Tibial artery (tissue), 4 donors: ENCODE measurements at regions of chr3 and their contacts with region 1.

Region 1: GRCh38 chr3:52056968-52057805 is 816 bp upstream of the DUSP7 start:
- DNase-seq: peak; percentile 99 to 100
- H3K4me3 ChIP-seq: peak overlapping the region; percentile 72 to 81
- H3K27ac ChIP-seq: peak overlapping the region; percentile 83 to 86
- H3K4me1 ChIP-seq: peaks cover 5 to 43% (median 33%) of the 10 kb centered on the region in 4 donors
- H3K27me3 ChIP-seq: no peaks in the 10 kb centered on the region
- CTCF ChIP-seq: peak in 1 of 2 experiments; percentile 10

Region 2: GRCh38 chr3:51617597-51617996 is 439.6 kb before region 1 on chr3:
- intact Hi-C with region 1: no loop called
- DNase-seq: no peak
- H3K4me3 ChIP-seq: no peak overlapping the region
- H3K27ac ChIP-seq: no peak overlapping the region
- H3K4me1 ChIP-seq: peaks cover 0 to 37% (median 22%) of the 10 kb centered on the region in 4 donors
- H3K27me3 ChIP-seq: no peaks in the 10 kb centered on the region
- CTCF ChIP-seq: no peak

Region 3: DNA sequence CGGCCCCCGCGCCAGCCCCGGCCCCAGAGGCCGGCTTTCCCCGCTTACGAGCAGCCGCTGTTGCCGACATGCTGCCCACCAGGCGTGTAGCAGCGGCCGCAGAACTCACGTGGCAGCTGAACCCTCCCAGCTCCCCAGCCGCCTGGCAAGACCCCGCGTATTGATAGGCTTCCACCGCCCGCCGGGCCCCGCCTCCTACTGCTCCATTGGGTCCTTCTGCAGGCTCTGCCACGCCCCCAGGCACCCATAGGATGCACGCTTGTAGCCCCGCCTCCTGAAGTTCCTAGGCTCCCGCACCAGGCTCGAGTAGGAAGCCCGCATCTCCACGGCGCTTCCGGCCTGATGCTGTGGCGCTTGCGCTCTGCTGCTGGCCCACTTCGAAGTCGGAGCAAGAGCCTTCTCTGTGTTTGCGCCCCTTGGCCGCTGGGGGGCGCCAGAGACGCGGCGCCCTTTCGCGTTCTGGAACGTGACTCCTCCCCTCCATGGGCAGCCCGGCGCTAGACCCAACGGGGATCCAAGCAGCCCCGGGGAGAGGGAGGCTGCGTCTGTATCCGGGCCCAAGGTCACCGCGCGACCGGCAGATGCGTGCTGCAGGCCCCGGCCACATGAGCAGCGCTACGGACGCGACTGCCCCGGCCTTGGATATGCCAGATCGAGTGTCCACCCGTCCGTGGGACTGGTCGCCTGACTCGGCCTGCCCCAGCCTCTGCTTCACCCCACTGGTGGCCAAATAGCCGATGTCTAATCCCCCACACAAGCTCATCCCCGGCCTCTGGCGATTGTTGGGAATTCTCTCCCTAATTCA is 115.2 kb before region 1 on chr3 and contains the starts of genes PARP3 and RRP9:
- intact Hi-C with region 1: loop called (anchors 5 kb)
- DNase-seq: peak; percentile 100
- H3K4me3 ChIP-seq: peak within 1 kb of the TSS; percentile 72 to 78
- H3K27ac ChIP-seq: peak within 1 kb of the TSS; percentile 88 to 97
- H3K4me1 ChIP-seq: peaks cover 0 to 33% (median 29%) of the 10 kb centered on the region in 4 donors
- H3K27me3 ChIP-seq: no peaks in the 10 kb centered on the region
- CTCF ChIP-seq: peak; percentile 99 to 100

Region 4: DNA sequence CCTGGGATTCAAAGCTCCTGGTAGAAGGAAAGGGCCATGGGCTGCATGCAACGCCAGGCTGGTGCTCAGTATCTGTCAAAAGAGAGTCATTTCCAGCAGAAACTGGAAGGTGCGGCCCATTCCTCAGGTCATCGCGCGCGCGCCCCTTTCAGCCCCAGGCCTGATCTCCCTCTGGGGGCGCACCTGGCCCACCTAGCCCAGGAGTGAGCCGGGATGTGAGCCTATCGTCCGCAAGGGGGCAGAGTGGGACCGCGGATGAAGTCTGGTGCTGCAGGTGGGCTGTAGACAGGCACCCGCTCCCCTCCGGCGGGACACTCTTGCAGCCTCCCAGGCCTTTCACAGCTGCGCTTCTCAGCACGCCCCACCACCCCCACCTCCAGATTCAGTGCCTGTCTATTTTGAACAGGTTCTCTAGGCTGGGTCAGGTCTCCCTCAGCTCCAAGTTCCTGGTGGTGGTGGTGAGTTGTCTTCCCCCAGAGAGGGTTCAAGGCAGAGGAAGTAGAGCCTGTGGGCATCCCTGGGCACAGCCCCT is 55.7 kb before region 1 on chr3:
- intact Hi-C with region 1: loop called (anchors 5 kb)
- DNase-seq: peak; percentile 60 to 81
- H3K4me3 ChIP-seq: no peak overlapping the region
- H3K27ac ChIP-seq: no peak overlapping the region
- H3K4me1 ChIP-seq: peaks cover 0 to 27% (median 21%) of the 10 kb centered on the region in 4 donors
- H3K27me3 ChIP-seq: peaks cover 0 to 29% of the 10 kb centered on the region in 2 donors
- CTCF ChIP-seq: peak; percentile 84 to 98

Region 5: GRCh38 chr3:52019352-52020080 is 37.7 kb before region 1 on chr3:
- intact Hi-C with region 1: loop called (anchors 2 kb)
- DNase-seq: peak; percentile 78 to 97
- H3K4me3 ChIP-seq: no peak overlapping the region
- H3K27ac ChIP-seq: peak overlapping the region; percentile 84 to 92
- H3K4me1 ChIP-seq: peaks cover 0 to 95% (median 83%) of the 10 kb centered on the region in 4 donors
- H3K27me3 ChIP-seq: no peaks in the 10 kb centered on the region
- CTCF ChIP-seq: peak in 1 of 2 experiments; percentile 12

Region 6: DNA sequence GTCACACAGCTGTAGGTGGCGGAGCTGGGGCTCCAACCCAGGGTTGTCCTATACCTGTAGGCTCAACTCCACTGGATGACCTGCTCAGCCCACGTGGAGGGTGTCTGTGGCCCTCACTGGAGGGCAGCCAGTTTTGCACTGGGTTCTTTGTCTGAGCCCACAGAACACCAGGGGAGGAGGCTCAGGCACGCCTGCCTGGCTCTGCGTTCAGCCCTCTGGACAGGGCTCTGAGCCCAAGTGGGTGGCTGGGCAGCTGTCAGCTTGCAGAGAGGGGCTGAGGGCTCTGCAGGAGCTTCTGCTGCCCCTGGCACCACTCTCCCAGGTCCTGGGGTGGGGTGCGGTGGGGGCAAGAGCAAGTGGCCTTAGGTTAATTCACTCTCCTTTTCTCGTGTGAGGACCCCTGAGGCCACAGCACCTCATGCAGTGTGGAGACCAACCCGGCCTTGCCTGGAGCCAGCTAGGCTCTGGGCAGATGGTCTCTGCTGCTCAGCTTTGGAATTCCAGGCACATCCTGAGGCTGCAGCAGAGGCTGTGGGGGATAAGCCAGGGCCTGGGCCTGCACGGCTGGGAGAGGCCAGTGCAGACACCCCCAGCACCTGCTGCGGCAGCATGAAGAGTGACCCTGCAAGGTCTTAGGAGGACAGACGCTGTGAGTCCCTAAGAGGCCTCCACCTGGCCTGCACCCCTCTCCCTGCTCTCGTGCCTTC is 24.3 kb before region 1 on chr3:
- intact Hi-C with region 1: no loop called
- DNase-seq: no peak
- H3K4me3 ChIP-seq: no peak overlapping the region
- H3K27ac ChIP-seq: no peak overlapping the region
- H3K4me1 ChIP-seq: no peaks in the 10 kb centered on the region
- H3K27me3 ChIP-seq: no peaks in the 10 kb centered on the region
- CTCF ChIP-seq: no peak

Region 7: DNA sequence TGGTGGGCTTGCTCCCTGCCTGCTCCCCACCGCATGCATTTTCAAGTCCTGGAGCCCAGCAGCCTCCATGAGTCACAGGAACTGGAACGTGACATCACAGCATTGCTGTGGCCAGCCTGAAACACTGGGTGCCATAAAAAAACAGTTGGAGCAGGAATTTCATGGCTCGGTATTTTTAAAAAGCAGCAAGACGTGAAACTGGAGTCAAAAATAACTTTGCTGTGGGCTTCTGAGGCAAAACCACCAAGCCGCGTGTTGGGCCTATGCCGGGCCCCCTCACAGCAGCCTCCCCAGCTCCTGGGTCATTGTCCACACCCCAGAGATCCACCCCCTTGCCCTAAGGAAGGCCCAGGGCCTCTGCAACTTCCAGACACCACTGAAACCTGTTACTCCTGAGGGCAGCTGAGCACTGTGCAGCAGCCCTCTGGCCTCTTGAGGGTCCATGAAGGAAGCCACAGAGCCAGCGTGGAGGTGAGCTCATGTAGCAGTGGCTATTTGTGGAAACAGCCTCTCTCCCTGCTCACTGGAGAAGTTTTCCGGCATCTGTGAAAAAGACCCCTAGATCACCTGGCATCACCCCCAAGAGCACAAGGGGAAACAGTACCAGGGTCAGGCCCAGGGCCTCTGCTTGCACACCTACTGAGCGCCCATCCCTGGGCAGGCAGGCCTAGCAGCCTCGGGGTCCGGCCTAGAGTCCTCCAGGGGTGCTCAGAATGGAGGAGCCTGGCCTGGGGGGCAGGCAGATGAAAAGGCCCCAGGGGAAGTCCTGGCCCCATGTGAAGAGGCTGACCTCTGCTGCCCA is 33.1 kb after region 1 on chr3:
- intact Hi-C with region 1: loop called (anchors 5 kb)
- DNase-seq: peak; percentile 73 to 91
- H3K4me3 ChIP-seq: no peak overlapping the region
- H3K27ac ChIP-seq: peak overlapping the region; percentile 88 to 94
- H3K4me1 ChIP-seq: peaks cover 0 to 77% (median 62%) of the 10 kb centered on the region in 4 donors
- H3K27me3 ChIP-seq: no peaks in the 10 kb centered on the region
- CTCF ChIP-seq: no peak

Region 8: DNA sequence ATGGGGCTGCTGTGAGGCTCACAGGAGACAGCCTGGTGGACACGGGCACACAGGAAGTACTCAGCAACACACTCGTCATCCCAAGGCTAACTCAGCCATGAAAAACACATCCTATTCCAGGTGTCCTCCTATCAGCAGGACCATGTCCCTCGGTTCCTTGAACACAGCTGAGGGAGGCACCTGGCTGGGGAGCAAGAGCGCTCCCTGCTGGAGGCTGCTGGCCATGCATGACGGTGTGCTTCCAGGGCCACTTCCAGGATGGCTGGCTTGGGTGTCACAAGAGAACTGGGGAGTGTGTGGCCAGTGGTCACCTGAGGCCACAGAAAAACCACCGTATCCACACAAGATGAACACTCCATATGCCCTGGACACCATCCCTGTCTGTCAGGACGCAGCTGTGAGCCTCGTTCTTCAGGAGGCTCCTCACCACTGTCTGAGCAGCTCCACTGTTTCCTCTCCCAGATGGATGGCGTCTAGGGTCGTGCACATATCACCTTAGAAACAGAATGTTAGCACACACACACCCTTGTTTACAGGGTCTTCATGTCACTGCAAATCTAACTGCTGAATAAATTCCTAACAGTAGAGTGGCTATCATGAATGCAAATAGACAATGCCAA is 66.0 kb after region 1 on chr3:
- intact Hi-C with region 1: loop called (anchors 5 kb)
- DNase-seq: peak; percentile 60 to 83
- H3K4me3 ChIP-seq: no peak overlapping the region
- H3K27ac ChIP-seq: peak overlapping the region in 1 of 2 donors; percentile 30
- H3K4me1 ChIP-seq: peaks cover 0 to 7% (median 0%) of the 10 kb centered on the region in 4 donors
- H3K27me3 ChIP-seq: no peaks in the 10 kb centered on the region
- CTCF ChIP-seq: peak; percentile 96 to 97